ENCODE measurements at regions of chr16 and their contacts with region 1.

Region 1: GRCh38 chr16:48632137-48632774 is 22.3 kb upstream of the N4BP1 start:
- DNase-seq: no peak
- H3K4me3 ChIP-seq: no peak overlapping the region
- H3K27ac ChIP-seq: no peak overlapping the region
- H3K4me1 ChIP-seq: peaks cover 3 to 9% (median 3%) of the 10 kb centered on the region in 4 donors
- H3K27me3 ChIP-seq: no peaks in the 10 kb centered on the region
- CTCF ChIP-seq: no peak
- EP300 ChIP-seq: no peak
- POLR2A ChIP-seq: no peak

Region 2: GRCh38 chr16:48206594-48207242 is 425.5 kb before region 1 on chr16:
- in situ Hi-C with region 1: loop called in 1 of 4 experiments (anchors 25 kb)
- intact Hi-C with region 1: no loop called
- DNase-seq: no peak
- H3K4me3 ChIP-seq: no peak overlapping the region
- H3K27ac ChIP-seq: no peak overlapping the region
- H3K4me1 ChIP-seq: peaks cover 0 to 3% (median 0%) of the 10 kb centered on the region in 4 donors
- H3K27me3 ChIP-seq: peaks cover 4% of the 10 kb centered on the region
- CTCF ChIP-seq: no peak
- EP300 ChIP-seq: no peak
- POLR2A ChIP-seq: no peak

Region 3: GRCh38 chr16:48244080-48244862 is 388.0 kb before region 1 on chr16 and contains the start of gene LONP2:
- in situ Hi-C with region 1: loop called in 2 of 4 experiments (anchors 10 to 25 kb)
- intact Hi-C with region 1: no loop called
- DNase-seq: peak; percentile 93
- H3K4me3 ChIP-seq: peak within 1 kb of the TSS; percentile 77 to 99 (median 84)
- H3K27ac ChIP-seq: peak within 1 kb of the TSS; percentile 91 to 94 (median 92)
- H3K4me1 ChIP-seq: peaks cover 11 to 30% (median 24%) of the 10 kb centered on the region in 4 donors
- H3K27me3 ChIP-seq: no peaks in the 10 kb centered on the region
- CTCF ChIP-seq: peak in 1 of 5 experiments; percentile 9
- EP300 ChIP-seq: no peak
- POLR2A ChIP-seq: peak; percentile 79
- total RNA-seq, gene LONP2: 51.3 to 104 (median 65.3) TPM

Region 4: DNA sequence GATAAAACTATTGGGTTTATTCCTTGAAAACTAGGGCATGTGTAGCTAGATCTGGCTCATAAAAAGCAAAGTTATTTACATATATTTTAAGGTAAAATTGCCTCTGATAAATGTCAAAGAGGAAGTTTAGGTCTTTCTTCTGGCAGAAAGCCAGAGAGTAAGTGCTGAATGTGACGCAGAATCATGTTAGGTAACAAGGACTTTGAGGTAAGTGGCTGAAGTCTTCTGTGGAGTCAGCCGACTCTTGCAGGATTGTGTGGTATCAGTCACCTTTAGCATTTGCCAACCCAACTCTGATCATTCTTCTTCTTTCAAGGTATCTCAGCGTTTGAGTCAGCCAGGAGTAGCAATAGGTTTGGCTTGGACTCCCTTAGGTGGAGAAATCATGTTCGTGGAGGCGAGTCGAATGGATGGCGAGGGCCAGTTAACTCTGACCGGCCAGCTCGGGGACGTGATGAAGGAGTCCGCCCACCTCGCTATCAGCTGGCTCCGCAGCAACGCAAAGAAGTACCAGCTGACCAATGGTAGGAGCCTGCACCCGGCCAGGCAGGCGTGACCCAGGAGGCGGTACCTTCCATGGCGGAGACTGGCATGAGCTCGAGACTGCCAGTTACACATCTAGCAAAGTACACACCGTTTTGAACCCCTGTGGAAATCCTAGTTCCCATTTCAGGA is 284.9 kb before region 1 on chr16:
- in situ Hi-C with region 1: loop called in 3 of 4 experiments (anchors 10 to 25 kb)
- intact Hi-C with region 1: no loop called
- DNase-seq: no peak
- H3K4me3 ChIP-seq: no peak overlapping the region
- H3K27ac ChIP-seq: no peak overlapping the region
- H3K4me1 ChIP-seq: no peaks in the 10 kb centered on the region
- H3K27me3 ChIP-seq: no peaks in the 10 kb centered on the region
- CTCF ChIP-seq: no peak
- EP300 ChIP-seq: no peak
- POLR2A ChIP-seq: no peak

Region 5: DNA sequence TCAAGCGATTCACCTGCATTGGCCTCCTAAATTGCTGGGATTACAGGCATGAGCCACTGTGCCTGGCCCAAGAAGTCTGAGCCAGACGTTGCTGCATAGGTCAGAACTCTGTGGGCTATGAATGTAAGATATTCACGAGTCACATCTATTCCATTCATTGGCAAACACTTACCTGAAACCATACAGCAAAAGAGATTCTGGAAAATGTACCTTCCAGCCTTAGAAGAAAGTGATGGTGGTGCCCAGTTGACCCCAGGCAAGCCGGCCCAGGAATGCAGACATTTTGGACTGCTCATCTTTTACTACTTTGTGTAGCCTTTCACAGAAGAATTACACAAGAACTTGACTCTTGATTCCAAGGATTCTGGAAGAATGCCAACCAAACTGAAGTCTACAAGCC is 113.3 kb after region 1 on chr16:
- in situ Hi-C with region 1: no loop called
- intact Hi-C with region 1: no loop called
- DNase-seq: no peak
- H3K4me3 ChIP-seq: no peak overlapping the region
- H3K27ac ChIP-seq: no peak overlapping the region
- H3K4me1 ChIP-seq: no peaks in the 10 kb centered on the region
- H3K27me3 ChIP-seq: no peaks in the 10 kb centered on the region
- CTCF ChIP-seq: no peak
- EP300 ChIP-seq: no peak
- POLR2A ChIP-seq: no peak

Measured in transverse colon (tissue), 4 donors.